ENCODE measurements at regions of chr17 and their contacts with region 1.

Region 1: DNA sequence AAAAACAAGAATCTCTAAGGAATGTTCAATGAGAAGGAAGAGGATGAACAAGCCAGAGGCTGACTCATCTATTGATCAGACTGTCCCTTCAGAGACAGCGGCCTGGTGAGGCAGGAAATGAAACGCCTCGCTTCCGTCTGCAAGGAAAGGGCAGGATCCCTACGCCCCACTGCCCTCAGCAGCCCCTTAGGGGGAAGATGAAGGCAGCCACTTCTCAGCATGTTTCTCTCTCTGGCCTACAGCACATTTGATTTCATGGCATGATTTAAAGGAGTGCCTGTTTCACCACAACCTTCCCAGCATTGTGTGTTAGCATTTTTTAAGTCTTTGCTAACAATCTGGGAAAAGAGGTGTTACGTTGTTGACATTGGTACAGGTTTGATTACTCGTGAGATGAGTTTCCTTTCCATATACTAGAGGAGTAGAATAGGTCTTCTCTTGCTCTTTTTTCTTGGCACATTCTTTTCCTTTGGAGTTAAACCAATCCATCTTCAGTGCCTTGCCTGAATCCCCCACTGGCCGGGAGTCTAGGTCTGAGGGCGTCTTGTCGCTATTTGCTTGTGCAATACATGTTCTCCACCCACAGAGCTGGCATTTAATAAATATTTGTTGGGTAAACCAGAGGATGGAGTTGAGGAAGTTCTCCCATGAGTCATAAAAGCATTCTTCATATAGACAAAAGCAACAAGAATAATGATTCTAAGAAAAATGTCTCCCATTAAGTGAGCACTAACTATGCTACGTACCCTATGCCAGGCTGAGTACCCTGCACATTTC is 47.4 kb downstream of the RBFOX3 start:
- DNase-seq: no peak
- ATAC-seq: no peak
- H3K4me3 ChIP-seq: no peak overlapping the region
- H3K27ac ChIP-seq: no peak overlapping the region
- H3K4me1 ChIP-seq: no peaks in the 10 kb centered on the region
- H3K27me3 ChIP-seq: peaks cover 0 to 79% (median 73%) of the 10 kb centered on the region in 7 donors
- CTCF ChIP-seq: no peak

Region 2: GRCh38 chr17:79504181-79504605 is 59.2 kb before region 1 on chr17:
- intact Hi-C with region 1: loop called in 1 of 10 experiments (anchors 10 kb)
- DNase-seq: no peak
- ATAC-seq: no peak
- H3K4me3 ChIP-seq: no peak overlapping the region
- H3K27ac ChIP-seq: no peak overlapping the region
- H3K4me1 ChIP-seq: no peaks in the 10 kb centered on the region
- H3K27me3 ChIP-seq: peaks cover 0 to 71% (median 60%) of the 10 kb centered on the region in 7 donors
- CTCF ChIP-seq: no peak